Aorta (tissue), 5 donors: ENCODE measurements at regions of chr3 and their contacts with region 1.

Region 1: GRCh38 chr3:88058591-88059368 is at the starts of genes CGGBP1 and ZNF654:
- DNase-seq: peak; percentile 98 to 99
- ATAC-seq: peak; percentile 98
- H3K4me3 ChIP-seq: peak within 1 kb of the TSS; percentile 88 to 92
- H3K27ac ChIP-seq: peak within 1 kb of the TSS; percentile 64 to 94
- H3K4me1 ChIP-seq: peaks cover 2 to 3% of the 10 kb centered on the region in 2 donors
- H3K27me3 ChIP-seq: no peaks in the 10 kb centered on the region
- total RNA-seq, gene CGGBP1: 65.8 to 73.6 TPM
- total RNA-seq, gene ZNF654: 18.0 to 28.3 TPM

Region 2: DNA sequence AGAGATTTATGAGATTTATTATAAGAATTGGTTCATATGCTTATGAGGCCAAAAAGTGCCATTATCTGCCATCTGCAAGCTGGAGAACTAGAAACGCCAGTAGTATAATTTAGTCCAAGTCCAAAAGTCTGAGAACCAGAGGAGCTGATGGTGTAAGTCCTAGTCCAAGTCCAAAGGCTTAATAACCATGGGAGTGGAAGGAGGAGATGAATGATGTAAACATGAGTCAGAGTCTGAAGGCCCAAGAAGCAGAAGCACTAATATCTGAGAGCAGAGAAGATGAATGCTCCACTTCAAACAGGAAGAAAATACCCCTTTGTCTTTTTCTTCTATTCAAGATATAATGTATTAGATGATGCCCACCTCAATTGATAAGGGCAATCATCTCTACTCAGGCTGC is 185.6 kb before region 1 on chr3:
- intact Hi-C with region 1: no loop called
- DNase-seq: no peak
- ATAC-seq: no peak
- H3K4me3 ChIP-seq: no peak overlapping the region
- H3K27ac ChIP-seq: no peak overlapping the region
- H3K4me1 ChIP-seq: no peaks in the 10 kb centered on the region
- H3K27me3 ChIP-seq: no peaks in the 10 kb centered on the region

Region 3: GRCh38 chr3:87975716-87976115 is 83.1 kb before region 1 on chr3:
- intact Hi-C with region 1: no loop called
- DNase-seq: no peak
- ATAC-seq: no peak
- H3K4me3 ChIP-seq: no peak overlapping the region
- H3K27ac ChIP-seq: no peak overlapping the region
- H3K4me1 ChIP-seq: no peaks in the 10 kb centered on the region
- H3K27me3 ChIP-seq: no peaks in the 10 kb centered on the region

Region 4: GRCh38 chr3:88113311-88114162 is 54.8 kb after region 1 on chr3:
- intact Hi-C with region 1: loop called in 1 of 2 experiments (anchors 10 kb)
- DNase-seq: no peak
- ATAC-seq: peak; percentile 85
- H3K4me3 ChIP-seq: no peak overlapping the region
- H3K27ac ChIP-seq: no peak overlapping the region
- H3K4me1 ChIP-seq: no peaks in the 10 kb centered on the region
- H3K27me3 ChIP-seq: no peaks in the 10 kb centered on the region

Region 5: DNA sequence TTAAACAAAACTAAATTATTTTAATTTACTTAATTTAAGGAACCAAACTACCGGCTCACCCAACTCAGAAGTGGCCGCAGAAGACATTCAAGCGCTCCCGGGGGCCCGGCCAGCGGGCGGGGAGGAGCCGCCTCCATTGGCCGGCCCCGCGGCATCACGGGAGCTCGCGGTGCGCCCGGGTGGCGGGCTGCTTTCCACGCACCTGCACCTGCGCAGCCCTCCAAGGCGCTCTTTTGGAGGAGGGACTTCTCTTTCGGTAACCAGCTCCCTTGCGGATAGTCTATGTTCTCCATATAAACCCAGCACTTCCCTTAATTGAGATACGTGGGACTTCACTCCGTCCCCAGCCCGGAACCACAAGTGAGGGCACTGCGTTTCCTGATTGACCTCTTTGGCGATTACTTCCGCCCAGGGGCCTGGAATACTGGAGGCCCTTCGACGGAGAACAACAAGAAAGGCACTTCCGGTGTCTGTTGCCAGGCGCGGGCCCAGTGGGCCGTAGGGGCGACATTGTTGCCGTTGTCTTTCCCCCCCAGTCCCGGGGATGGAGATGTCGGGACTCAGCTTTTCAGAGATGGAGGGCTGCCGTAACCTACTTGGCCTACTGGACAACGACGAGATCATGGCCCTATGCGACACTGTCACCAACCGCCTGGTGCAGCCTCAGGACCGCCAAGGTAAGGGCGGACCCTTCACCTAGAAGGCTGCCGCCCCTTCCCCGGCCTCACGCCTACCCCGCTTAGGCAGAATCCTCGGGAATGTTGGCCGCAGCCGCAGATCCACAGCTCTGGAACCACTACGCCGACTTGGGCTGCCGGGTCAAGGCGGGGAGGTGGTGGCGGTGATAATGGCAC is 91.0 kb after region 1 on chr3 and contains the start of gene C3orf38:
- intact Hi-C with region 1: loop called (anchors 2 to 5 kb)
- DNase-seq: peak; percentile 93 to 95
- ATAC-seq: peak; percentile 96
- H3K4me3 ChIP-seq: peak within 1 kb of the TSS; percentile 52 to 95
- H3K27ac ChIP-seq: peak within 1 kb of the TSS in 1 of 2 donors; percentile 88
- H3K4me1 ChIP-seq: peaks cover 0 to 5% of the 10 kb centered on the region in 2 donors
- H3K27me3 ChIP-seq: no peaks in the 10 kb centered on the region
- total RNA-seq, gene C3orf38: 22.4 to 23.6 TPM